Naive thymus-derived CD8-positive, alpha-beta T cell (primary cell): ENCODE measurements at regions of chr16 and their contacts with region 1.

Region 1: DNA sequence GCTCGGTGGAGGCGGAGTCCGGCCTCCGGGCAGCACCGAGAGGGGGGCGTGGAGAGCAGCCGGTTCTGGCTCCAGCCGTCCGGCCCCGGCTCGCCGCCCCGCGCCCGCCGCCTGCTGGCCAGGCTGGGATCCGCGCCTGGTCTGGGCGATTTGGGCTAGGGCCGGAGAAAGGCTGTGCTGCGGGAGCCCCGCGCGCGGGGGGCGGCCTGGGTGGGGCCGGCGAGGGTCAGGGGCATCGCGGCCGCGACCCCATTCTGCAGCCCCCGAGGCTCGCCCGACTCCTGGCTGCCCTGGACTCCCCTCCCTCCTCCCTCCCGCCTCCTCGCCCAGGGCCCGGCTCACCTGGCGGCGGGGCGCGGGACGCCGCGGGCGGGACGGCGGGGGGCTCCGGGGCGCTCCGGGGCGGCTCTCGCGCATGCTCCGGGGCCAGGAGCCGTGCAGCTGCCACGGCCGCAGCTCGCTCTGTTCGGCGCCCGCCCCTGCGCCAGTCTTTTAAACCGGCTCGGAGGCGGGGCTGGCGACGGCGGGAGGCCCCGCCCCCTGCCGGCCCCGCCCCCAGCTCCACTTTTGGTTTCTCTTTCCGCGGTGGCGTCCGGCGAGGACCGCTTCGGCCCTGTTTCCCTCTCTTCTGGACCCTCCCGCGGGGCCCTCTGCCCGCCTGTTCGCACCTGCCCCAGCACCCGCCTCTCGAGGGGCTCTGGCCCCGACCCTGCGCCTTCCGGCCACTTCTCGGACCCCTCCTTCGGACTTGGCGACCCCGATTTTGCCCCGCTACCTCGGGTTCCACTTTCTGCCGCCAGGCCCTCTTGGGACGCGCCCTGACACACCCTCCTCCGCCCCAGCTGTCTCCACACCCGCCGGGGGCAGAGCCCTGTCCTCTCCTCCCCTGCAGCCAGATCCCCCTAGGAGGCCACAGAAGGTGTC is at the start of gene SOCS1:
- DNase-seq: peak; percentile 80 to 96 (median 90)
- ATAC-seq: peak; percentile 66
- H3K4me3 Mint-ChIP-seq: peak within 1 kb of the TSS; percentile 91 to 98 (median 95)
- H3K27ac Mint-ChIP-seq: peak within 1 kb of the TSS; percentile 92 to 99 (median 98)
- H3K4me1 Mint-ChIP-seq: peaks cover 30 to 58% (median 57%) of the 10 kb centered on the region in 4 donors
- H3K27me3 Mint-ChIP-seq: no peaks in the 10 kb centered on the region
- polyA plus RNA-seq, gene SOCS1: 13.5 to 24.0 (median 13.5) TPM

Region 2: DNA sequence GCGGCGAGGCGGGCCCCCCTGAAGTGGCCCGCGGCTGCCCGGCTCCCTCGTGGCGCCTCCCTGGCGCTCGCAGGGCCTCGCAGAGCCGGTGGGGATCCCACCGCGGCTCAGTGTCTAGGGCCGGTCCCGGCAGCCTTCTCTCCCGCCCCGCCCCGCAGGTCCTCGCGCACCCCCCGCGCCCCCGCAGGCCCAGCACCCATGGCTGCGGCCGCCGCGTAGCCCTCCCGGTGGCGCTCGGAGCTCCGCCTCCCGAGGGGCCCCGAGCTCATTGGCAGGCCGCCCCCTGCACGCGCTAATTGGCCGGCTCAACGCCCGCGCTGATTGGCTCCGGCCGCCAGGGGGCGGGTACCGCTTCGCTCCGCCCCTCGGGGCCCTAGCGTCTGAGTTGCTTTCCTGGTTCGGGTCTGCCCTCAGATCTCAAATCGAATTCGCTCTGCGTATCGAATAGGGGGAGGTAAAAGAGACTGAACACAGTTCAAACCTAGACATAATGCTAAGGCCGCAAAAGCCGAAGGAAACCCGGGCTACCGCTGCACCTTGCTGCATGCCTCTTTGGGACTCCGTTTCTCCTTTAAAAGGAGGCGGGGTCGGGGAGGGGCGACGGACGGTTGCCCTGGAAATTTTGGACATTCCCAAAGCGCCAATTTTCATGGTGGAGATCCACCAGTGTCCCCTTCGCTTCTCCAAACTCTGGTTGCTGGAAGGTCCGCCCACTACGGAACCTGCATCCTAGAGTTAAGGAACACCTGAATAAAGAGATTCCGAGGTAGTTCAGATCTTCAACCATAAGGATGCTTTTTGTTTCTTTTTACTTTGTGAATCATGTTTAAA is 313.6 kb before region 1 on chr16 and contains the start of gene DEXI:
- POLR2A ChIA-PET with region 1: interaction called, 12 read pairs
- DNase-seq: peak; percentile 91 to 96 (median 95)
- ATAC-seq: peak; percentile 81 to 85
- H3K4me3 Mint-ChIP-seq: peak within 1 kb of the TSS; percentile 85 to 96 (median 92)
- H3K27ac Mint-ChIP-seq: peak within 1 kb of the TSS; percentile 60 to 94 (median 88)
- H3K4me1 Mint-ChIP-seq: peaks cover 39 to 87% (median 82%) of the 10 kb centered on the region in 4 donors
- H3K27me3 Mint-ChIP-seq: no peaks in the 10 kb centered on the region
- polyA plus RNA-seq, gene DEXI: 50.8 to 60.4 (median 51.9) TPM

Region 3: DNA sequence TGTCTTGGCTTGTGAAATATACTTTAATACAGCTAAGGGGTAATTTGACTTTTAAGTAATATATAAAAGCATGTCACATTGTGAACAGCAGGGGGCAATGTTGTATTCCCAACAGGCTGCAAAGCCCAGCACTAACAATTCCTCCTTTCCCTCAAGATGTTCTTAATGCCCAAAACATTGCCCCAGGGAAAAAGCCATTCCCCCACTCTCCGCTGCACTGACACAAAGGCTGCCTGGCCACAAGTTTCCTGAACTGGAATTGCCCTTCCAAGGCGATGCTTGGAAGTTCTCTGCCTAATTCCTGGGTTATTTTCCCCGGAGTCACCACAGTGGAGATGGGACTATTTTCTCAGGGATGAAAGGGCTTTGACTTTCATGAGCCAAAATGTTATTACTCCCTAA is 284.4 kb before region 1 on chr16:
- POLR2A ChIA-PET with region 1: interaction called, 33 read pairs
- DNase-seq: peak in 5 of 10 donors; percentile 26 to 56 (median 49)
- ATAC-seq: peak in 1 of 2 donors; percentile 53
- H3K4me3 Mint-ChIP-seq: no peak overlapping the region
- H3K27ac Mint-ChIP-seq: no peak overlapping the region
- H3K4me1 Mint-ChIP-seq: peaks cover 10 to 22% (median 20%) of the 10 kb centered on the region in 4 donors
- H3K27me3 Mint-ChIP-seq: no peaks in the 10 kb centered on the region

Region 4: DNA sequence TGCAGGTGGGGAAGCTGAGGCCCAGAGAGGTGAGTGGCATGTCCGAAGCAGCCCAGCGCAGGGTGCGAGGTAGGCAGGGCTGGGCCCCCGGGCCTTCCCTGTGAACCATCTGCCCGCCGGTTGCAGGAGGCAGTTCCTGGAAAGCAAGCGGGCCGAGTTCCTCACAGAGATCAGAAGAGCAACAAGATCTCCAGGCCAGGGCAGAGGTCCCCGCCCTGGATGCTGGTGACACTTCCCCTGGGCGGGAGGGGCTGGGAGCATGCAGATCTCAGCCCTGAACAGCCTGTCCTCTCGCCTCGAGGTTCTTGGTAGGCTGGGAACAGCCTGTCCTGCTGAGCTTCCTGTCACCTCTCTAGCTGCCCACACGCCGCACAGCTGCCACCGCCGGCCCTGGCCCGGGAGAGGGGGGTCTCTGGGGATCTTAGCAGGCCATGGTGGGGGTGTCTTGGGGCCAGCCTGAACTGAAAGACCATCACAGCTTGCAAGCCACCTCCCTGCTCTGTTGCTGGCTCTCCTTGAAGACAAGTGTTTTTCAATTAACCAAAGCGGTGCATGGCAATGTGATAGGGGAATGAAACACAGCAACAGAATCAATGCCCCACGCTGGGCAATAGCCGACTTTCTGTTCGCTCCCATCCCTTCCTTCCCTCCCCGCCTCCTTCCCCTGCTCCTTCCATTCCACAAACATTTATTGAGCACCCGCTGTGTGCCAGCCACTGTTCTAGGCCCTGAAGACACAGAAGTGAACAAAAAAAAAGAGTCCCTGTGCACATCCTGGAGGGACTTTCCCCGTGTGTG is 31.7 kb before region 1 on chr16:
- POLR2A ChIA-PET with region 1: interaction called, 148 read pairs
- DNase-seq: peak; percentile 17 to 83 (median 52)
- ATAC-seq: peak; percentile 35 to 54
- H3K4me3 Mint-ChIP-seq: peak overlapping the region; percentile 48 to 90 (median 80)
- H3K27ac Mint-ChIP-seq: peak overlapping the region; percentile 94 to 99 (median 97)
- H3K4me1 Mint-ChIP-seq: peaks cover 29 to 66% (median 47%) of the 10 kb centered on the region in 4 donors
- H3K27me3 Mint-ChIP-seq: no peaks in the 10 kb centered on the region

Region 5: DNA sequence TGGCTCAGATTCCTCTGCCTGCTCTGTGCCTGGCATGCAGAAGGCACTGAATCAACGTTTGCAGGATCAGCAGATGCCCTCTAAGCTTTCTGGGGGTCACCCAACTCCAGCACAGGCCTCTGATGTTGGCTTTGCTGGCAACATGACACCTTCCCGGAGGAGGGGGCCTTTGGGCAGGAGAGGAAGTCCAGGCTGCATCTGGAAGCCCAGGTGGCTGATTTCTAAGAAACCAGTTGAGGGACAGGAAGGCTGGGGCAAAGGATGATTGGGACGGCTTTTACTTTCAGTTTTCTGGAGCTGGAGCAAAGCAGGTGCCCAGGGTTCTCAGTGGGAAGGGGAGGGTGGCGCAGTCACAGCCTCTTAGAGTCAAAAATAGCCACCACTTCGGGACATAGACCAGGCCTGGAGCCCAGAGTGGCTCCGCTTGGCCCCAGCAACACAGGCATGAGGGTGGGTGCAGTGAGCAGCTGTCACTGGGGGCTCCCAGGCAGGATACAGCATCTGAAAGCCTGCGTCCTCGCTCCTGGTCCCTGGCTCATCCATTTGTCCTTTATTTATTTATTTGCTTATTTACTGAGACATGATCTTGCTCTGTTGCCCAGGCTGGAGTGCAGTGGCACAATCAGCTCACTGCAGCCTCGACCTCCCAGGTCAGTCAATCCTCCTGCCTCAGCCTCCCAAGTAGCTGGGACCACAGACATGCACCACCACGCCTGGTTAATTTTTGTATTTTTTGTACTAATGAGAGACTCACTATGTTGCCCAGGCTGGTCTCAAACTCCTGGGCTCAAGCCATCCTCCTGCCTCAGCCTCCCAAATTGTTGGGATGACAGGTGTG is 15.1 kb before region 1 on chr16:
- POLR2A ChIA-PET with region 1: interaction called, 19 read pairs
- DNase-seq: no peak
- ATAC-seq: peak; percentile 25 to 48
- H3K4me3 Mint-ChIP-seq: peak overlapping the region in 7 of 10 donors; percentile 20 to 77 (median 63)
- H3K27ac Mint-ChIP-seq: peak overlapping the region in 5 of 10 donors; percentile 41 to 81 (median 56)
- H3K4me1 Mint-ChIP-seq: peaks cover 0 to 26% (median 7%) of the 10 kb centered on the region in 4 donors
- H3K27me3 Mint-ChIP-seq: no peaks in the 10 kb centered on the region

Region 6: DNA sequence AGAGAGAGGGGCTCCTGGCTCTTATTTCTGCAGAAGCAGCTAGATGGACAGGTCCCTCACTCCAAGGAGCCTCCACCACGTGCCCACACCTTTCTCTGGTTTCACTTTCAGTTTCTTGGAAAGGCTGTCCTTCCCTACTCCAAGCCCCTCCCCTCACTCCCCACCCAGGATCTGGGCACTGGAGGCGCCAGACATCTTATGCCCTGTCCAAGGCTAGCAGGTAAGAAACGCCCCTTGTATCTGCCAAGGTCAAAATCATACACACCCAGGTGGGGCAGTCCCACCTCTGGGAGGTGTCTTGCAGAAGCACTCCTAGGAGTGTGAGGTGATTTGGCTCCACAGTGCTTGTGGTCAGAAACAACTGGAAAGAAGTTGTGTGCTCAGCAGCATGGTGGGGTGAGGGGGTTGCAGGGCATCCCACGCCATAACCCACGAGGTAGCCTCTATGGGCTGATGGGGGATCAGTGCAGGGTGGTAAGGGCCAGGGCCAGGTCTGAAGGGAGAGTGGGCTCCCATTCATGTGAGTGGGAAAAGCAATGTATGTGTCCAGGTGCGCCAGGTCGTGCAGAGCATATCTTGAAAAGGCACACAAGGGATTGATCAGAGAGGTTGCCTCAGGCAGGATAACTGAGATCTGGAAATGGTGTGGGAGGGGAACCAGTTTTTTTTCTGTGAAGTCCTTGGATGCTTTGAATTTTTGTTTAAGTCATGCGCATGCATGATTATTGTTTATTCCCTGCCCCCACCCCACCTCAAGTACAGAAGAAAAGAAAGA is 56.9 kb after region 1 on chr16:
- POLR2A ChIA-PET with region 1: interaction called, 71 read pairs
- DNase-seq: peak in 1 of 10 donors; percentile 12
- ATAC-seq: peak; percentile 18 to 23
- H3K4me3 Mint-ChIP-seq: peak overlapping the region in 8 of 10 donors; percentile 12 to 75 (median 56)
- H3K27ac Mint-ChIP-seq: peak overlapping the region; percentile 71 to 91 (median 84)
- H3K4me1 Mint-ChIP-seq: peaks cover 12 to 61% (median 46%) of the 10 kb centered on the region in 4 donors
- H3K27me3 Mint-ChIP-seq: no peaks in the 10 kb centered on the region

Region 7: DNA sequence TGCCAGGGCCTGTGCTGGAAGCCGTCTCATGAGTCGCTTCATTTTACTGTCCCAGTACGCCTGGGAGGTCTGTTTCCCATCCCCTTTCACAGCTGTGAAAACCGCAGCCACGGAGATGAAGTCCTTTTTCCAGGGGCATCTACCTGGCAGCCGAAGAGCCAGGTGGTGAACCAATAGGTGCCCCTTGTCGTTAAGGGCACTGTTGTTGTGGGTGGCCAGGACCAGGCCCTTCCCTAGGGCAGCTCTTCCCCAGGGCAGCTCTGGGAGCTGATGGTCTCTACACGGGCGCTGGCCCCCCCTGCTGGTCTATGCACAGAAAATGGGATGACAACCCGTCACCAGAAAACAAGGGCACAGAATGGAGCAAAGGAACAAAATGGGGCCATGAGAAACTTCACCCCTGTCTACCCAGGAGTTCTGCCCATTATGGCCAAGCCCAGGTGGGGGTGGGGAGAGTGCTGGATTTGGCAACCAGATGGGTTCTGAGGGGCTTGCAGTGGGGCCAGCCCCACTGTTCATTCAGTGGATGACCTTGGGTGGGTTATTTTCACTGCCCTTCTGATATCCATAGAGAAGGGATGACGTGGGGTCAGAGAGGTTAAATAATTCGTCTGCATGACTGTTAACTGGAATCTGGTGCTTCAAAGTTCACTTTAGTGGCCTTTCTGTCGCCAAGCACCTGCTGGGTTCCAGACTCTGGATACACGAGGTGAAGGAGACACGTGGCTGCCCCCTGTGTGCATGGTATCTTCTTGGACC is 100.8 kb after region 1 on chr16:
- POLR2A ChIA-PET with region 1: interaction called, 107 read pairs
- DNase-seq: peak in 9 of 10 donors; percentile 26 to 76 (median 43)
- ATAC-seq: no peak
- H3K4me3 Mint-ChIP-seq: peak overlapping the region in 3 of 10 donors; percentile 13 to 14 (median 14)
- H3K27ac Mint-ChIP-seq: peak overlapping the region in 8 of 10 donors; percentile 15 to 100 (median 82)
- H3K4me1 Mint-ChIP-seq: peaks cover 30 to 63% (median 53%) of the 10 kb centered on the region in 4 donors
- H3K27me3 Mint-ChIP-seq: peaks cover 0 to 18% (median 0%) of the 10 kb centered on the region in 5 donors